ENCODE measurements at regions of chr5 and their contacts with region 1.

Region 1: GRCh38 chr5:179623003-179623880 is at the start of gene HNRNPH1:
- DNase-seq: peak; percentile 95 to 99 (median 99)
- ATAC-seq: peak; percentile 74
- H3K4me3 ChIP-seq: peak within 1 kb of the TSS; percentile 86
- H3K4me3 Mint-ChIP-seq: peak within 1 kb of the TSS; percentile 99
- H3K27ac ChIP-seq: peak within 1 kb of the TSS; percentile 95 to 99
- H3K27ac Mint-ChIP-seq: peak within 1 kb of the TSS; percentile 100
- H3K4me1 ChIP-seq: peaks cover 38% of the 10 kb centered on the region
- H3K4me1 Mint-ChIP-seq: peaks cover 55% of the 10 kb centered on the region
- H3K27me3 ChIP-seq: no peaks in the 10 kb centered on the region
- H3K27me3 Mint-ChIP-seq: peaks cover 8% of the 10 kb centered on the region
- CTCF ChIP-seq: no peak
- total RNA-seq, gene HNRNPH1: 2,404 to 2,435 TPM

Region 2: GRCh38 chr5:179195561-179196404 is 427.5 kb before region 1 on chr5:
- CTCF ChIA-PET with region 1: no interaction called
- POLR2A ChIA-PET with region 1: no interaction called
- intact Hi-C with region 1: no loop called
- DNase-seq: no peak
- ATAC-seq: no peak
- H3K4me3 ChIP-seq: no peak overlapping the region
- H3K4me3 Mint-ChIP-seq: no peak overlapping the region
- H3K27ac ChIP-seq: no peak overlapping the region
- H3K27ac Mint-ChIP-seq: no peak overlapping the region
- H3K4me1 ChIP-seq: no peaks in the 10 kb centered on the region
- H3K4me1 Mint-ChIP-seq: no peaks in the 10 kb centered on the region
- H3K27me3 ChIP-seq: no peaks in the 10 kb centered on the region
- H3K27me3 Mint-ChIP-seq: no peaks in the 10 kb centered on the region
- CTCF ChIP-seq: no peak

Region 3: GRCh38 chr5:179559284-179560252 is 63.7 kb before region 1 on chr5:
- CTCF ChIA-PET with region 1: no interaction called
- POLR2A ChIA-PET with region 1: interaction called, 98 read pairs
- intact Hi-C with region 1: loop called in 1 of 2 experiments (anchors 10 kb)
- DNase-seq: peak; percentile 65 to 95 (median 84)
- ATAC-seq: peak; percentile 99
- H3K4me3 ChIP-seq: peak overlapping the region; percentile 60
- H3K4me3 Mint-ChIP-seq: peak overlapping the region; percentile 90
- H3K27ac ChIP-seq: peak overlapping the region; percentile 4 to 16
- H3K27ac Mint-ChIP-seq: peak overlapping the region; percentile 89
- H3K4me1 ChIP-seq: peaks cover 10% of the 10 kb centered on the region
- H3K4me1 Mint-ChIP-seq: peaks cover 28% of the 10 kb centered on the region
- H3K27me3 ChIP-seq: no peaks in the 10 kb centered on the region
- H3K27me3 Mint-ChIP-seq: no peaks in the 10 kb centered on the region
- CTCF ChIP-seq: no peak

Region 4: DNA sequence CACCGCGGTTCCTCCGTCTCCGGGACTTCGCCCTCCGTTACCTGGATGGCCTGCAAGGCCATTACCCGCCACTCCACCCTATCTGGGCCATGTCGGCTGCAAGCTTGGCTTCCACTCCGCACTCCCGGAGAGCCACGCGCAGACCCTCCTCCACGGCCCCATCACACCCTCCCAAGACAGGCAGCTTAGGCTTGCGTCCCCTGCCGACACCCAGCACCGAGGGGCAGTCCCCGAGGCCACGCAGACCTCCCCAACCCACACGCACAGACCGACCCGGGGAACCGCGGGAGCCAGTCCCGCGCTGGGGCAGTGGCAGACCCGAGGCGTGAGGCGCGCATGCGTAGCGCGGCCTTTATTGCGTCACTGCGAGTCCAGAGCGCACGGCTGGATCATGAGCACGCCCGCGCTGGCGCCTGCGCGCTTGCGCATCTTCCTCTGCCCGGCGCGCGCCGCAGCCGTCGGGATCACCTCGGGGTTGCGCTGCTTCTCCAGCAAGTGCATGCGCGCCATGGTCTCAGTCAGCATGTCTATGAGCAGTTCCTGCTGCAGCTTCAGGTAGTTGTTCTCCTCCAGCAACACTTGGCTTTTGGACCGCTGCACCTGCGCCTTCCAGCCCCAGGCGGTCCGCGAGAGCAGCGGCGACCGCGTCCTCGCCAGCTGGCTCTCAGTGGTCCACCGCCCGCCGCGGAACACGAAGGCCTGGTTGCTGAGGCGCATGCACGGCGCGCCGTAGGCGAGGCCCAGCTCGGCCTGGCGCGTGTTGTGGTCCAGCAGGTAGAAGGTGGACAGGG is 55.2 kb after region 1 on chr5:
- CTCF ChIA-PET with region 1: interaction called, 9 read pairs
- POLR2A ChIA-PET with region 1: interaction called, 53 read pairs
- intact Hi-C with region 1: no loop called
- DNase-seq: peak; percentile 83 to 98 (median 92)
- ATAC-seq: peak; percentile 86
- H3K4me3 ChIP-seq: peak overlapping the region; percentile 99
- H3K4me3 Mint-ChIP-seq: peak overlapping the region; percentile 97
- H3K27ac ChIP-seq: peak overlapping the region; percentile 83 to 85
- H3K27ac Mint-ChIP-seq: peak overlapping the region; percentile 98
- H3K4me1 ChIP-seq: peaks cover 36% of the 10 kb centered on the region
- H3K4me1 Mint-ChIP-seq: peaks cover 35% of the 10 kb centered on the region
- H3K27me3 ChIP-seq: no peaks in the 10 kb centered on the region
- H3K27me3 Mint-ChIP-seq: no peaks in the 10 kb centered on the region
- CTCF ChIP-seq: no peak

Region 5: DNA sequence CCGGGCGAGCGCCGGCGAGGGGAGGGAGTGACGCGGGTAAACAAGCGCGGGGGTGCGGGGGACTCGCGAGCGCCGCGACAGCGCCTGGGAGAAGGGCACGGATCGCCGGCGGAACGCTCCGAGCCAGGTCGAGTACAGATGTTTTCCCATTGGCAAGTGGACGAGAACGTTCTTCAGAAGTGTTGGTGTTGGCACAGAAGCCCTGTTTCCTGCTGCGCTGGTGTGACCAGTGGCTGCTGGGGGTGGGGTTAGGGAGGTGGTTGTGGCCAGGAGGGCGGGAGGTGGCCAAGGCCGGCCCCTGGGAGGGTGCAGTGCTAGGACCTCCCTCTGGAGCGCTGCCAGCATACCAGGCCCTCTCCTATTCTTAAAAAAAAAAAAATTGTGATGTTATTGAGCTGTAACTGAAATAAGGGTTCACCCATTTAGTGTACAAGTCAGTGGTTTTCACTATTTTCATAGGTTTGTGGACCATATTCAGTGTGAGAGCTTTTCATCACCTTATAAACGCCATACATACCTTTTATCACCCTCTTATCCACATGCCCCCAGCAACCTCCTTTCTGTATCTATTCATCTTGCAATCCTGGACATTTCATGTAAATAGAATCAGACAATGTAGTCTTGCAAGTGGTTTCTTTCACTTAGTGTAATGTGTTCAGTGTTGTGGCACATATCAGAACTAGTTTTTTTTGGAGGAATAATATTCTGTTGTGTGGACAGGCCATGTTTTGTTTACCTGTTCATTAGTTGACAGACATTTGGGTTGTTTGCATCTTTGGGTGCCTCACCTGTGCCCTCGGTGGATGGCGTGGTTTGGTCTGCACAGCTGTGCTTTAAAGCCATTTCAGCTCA is 198.6 kb after region 1 on chr5:
- CTCF ChIA-PET with region 1: no interaction called
- POLR2A ChIA-PET with region 1: interaction called, 27 read pairs
- intact Hi-C with region 1: no loop called
- DNase-seq: peak; percentile 69 to 95 (median 84)
- ATAC-seq: peak; percentile 66
- H3K4me3 ChIP-seq: peak overlapping the region; percentile 83
- H3K4me3 Mint-ChIP-seq: peak overlapping the region; percentile 99
- H3K27ac ChIP-seq: peak overlapping the region; percentile 84 to 96
- H3K27ac Mint-ChIP-seq: peak overlapping the region; percentile 99
- H3K4me1 ChIP-seq: peaks cover 64% of the 10 kb centered on the region
- H3K4me1 Mint-ChIP-seq: peaks cover 61% of the 10 kb centered on the region
- H3K27me3 ChIP-seq: peaks cover 0 to 4% of the 10 kb centered on the region in 2 experiments
- H3K27me3 Mint-ChIP-seq: no peaks in the 10 kb centered on the region
- CTCF ChIP-seq: no peak

Measured in CD4-positive, alpha-beta T cell (primary cell).